Activated CD4-positive, alpha-beta memory T cell treated with anti-CD3 and anti-CD28 coated beads, Interleukin-2, amount 10 ng/mL, durations not matched to agents 7 days and 5 days (primary cell): ENCODE measurements at regions of chr11 and their contacts with region 1.

Region 1: DNA sequence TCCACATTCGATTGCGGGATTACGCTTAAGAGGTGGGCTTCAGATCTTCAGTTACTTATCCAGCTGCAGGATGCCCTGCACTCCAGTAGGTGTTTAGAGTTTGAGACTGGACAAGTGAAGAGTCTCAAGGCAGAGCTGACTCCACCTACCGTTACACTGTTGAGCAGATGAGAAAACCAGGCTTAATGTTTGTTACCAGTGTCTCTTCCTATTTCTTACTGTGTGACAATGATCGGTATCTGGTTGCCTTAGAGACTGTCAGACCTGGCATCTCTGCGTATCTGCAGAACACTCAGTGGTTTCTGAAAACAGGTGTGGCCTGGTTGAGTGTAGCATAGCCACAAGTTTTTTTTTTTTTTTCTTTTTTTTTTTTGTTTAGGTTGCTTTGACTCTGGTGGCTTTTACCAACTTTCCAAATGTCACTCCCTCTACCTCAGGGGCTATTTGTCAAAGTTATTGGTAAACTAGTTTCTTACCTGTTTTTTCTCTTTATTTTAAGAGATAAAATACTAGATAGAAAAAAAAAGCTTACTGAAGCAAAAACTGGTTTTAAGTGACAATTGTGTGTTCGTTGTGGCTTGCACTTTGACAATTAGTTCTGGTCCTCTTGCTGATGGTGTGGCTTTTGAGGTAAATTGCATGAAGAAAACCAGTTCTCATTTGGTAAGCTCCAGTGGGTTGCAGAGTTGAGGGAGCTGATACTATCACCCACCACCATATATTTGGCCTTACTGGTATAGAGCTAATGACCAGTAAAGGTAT is 284.8 kb downstream of the ETS1 start:
- DNase-seq: peak; percentile 84
- H3K4me3 Mint-ChIP-seq: peak overlapping the region; percentile 84
- H3K27ac Mint-ChIP-seq: peak overlapping the region; percentile 87
- H3K4me1 Mint-ChIP-seq: peaks cover 72% of the 10 kb centered on the region
- H3K27me3 Mint-ChIP-seq: no peaks in the 10 kb centered on the region

Region 2: DNA sequence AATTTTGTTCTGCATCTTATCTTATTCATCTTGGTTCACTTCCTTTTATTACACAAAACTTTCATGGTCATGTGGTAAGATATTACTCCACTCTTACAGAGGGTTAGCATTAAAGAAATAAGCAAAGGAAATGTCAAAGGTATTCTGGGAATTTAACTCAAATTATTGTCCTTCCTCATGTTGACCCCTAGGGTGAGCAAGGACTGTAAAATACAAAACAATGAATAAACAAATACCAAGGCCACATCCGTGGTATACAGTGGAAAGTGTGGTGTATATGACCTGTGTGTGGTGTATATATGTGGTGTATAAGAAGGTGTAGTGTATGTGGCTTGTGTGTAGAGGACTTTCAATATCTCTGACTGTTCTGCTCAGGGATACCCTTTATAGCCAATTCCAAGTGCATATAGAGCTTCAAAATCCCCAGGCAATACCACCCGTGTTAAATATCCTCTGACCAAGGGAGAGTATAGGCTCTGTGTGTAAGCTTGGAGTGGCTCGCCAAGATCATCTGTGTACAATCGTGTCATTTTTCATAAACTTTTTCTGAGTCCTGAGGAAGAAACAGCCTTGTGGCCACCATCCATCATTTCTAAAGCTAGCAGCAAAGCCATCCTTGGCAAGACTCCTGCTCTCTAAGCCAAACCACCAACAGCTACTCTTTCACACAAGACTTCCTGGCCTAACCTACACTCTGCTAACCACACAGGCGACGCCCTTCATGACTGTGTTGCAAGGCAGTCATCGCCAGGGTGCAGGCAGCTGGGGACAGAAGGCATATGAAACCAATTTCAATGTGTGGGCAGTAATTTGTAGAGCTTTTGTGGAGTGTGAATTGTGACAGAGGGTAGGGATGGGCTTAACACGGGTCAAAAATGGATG is 263.2 kb before region 1 on chr11:
- CTCF ChIA-PET with region 1: interaction called, 5 read pairs
- POLR2A ChIA-PET with region 1: interaction called, 16 read pairs
- DNase-seq: peak; percentile 89
- H3K4me3 Mint-ChIP-seq: peak overlapping the region; percentile 64
- H3K27ac Mint-ChIP-seq: peak overlapping the region; percentile 98
- H3K4me1 Mint-ChIP-seq: peaks cover 48% of the 10 kb centered on the region
- H3K27me3 Mint-ChIP-seq: no peaks in the 10 kb centered on the region

Region 3: DNA sequence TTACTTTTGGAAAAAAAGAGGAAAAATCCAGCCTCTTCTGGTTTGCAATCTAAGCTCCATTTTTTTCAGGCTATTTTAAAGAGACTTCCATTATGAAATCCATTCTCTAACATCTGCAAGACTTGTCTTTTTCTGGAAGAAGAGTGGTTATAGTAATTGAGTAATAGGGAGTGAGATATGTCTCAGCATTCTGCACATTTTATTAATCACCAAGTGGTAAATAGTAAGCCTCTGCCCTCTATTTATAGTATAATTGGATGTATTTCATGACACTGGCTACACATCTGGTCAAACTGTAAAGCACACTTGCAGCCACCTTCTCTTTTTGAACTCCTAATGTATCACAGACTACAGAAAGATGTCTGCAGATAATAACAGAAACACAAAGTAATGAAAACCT is 106.4 kb before region 1 on chr11:
- CTCF ChIA-PET with region 1: no interaction called
- POLR2A ChIA-PET with region 1: no interaction called
- DNase-seq: no peak
- H3K4me3 Mint-ChIP-seq: no peak overlapping the region
- H3K27ac Mint-ChIP-seq: no peak overlapping the region
- H3K4me1 Mint-ChIP-seq: peaks cover 34% of the 10 kb centered on the region
- H3K27me3 Mint-ChIP-seq: peaks cover 2% of the 10 kb centered on the region

Region 4: GRCh38 chr11:128246364-128246801 is 56.2 kb before region 1 on chr11:
- CTCF ChIA-PET with region 1: no interaction called
- POLR2A ChIA-PET with region 1: no interaction called
- DNase-seq: no peak
- H3K4me3 Mint-ChIP-seq: no peak overlapping the region
- H3K27ac Mint-ChIP-seq: no peak overlapping the region
- H3K4me1 Mint-ChIP-seq: no peaks in the 10 kb centered on the region
- H3K27me3 Mint-ChIP-seq: peaks cover 6% of the 10 kb centered on the region

Region 5: GRCh38 chr11:128261011-128261421 is 41.6 kb before region 1 on chr11:
- CTCF ChIA-PET with region 1: no interaction called
- POLR2A ChIA-PET with region 1: no interaction called
- DNase-seq: no peak
- H3K4me3 Mint-ChIP-seq: no peak overlapping the region
- H3K27ac Mint-ChIP-seq: no peak overlapping the region
- H3K4me1 Mint-ChIP-seq: no peaks in the 10 kb centered on the region
- H3K27me3 Mint-ChIP-seq: peaks cover 9% of the 10 kb centered on the region

Region 6: DNA sequence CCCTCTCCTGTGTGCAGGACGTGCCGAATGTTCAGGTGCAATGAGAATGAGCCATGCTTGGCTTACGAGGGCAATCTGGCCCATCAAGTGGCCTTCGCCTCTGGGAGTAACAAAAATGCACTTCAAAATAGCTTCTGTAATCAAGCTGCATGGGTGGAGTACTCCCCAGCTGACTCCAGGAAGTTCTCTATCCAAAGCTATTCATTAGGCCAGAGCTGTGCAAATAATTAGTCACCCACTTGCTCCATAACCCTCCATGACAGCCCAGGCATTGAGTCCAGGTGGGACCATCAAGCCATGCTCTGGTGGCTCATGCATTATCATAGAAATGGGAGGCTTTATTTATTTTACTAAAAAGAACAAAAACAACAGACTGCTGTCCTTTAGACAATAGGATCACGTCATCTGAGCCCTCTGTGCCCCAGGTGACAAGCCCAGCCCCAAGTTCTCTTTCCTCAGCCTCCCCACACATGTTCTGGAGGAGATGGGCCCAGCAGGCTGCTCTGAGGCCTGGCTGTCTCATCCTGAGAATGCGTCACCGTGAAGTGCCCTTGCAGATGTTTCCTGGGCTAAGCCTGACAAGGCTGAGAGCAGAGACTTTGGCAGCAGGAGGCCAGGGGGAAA is 40.0 kb after region 1 on chr11:
- CTCF ChIA-PET with region 1: interaction called, 5 read pairs
- POLR2A ChIA-PET with region 1: interaction called, 66 read pairs
- DNase-seq: peak; percentile 79
- H3K4me3 Mint-ChIP-seq: peak overlapping the region; percentile 65
- H3K27ac Mint-ChIP-seq: peak overlapping the region; percentile 96
- H3K4me1 Mint-ChIP-seq: peaks cover 79% of the 10 kb centered on the region
- H3K27me3 Mint-ChIP-seq: no peaks in the 10 kb centered on the region

Region 7: DNA sequence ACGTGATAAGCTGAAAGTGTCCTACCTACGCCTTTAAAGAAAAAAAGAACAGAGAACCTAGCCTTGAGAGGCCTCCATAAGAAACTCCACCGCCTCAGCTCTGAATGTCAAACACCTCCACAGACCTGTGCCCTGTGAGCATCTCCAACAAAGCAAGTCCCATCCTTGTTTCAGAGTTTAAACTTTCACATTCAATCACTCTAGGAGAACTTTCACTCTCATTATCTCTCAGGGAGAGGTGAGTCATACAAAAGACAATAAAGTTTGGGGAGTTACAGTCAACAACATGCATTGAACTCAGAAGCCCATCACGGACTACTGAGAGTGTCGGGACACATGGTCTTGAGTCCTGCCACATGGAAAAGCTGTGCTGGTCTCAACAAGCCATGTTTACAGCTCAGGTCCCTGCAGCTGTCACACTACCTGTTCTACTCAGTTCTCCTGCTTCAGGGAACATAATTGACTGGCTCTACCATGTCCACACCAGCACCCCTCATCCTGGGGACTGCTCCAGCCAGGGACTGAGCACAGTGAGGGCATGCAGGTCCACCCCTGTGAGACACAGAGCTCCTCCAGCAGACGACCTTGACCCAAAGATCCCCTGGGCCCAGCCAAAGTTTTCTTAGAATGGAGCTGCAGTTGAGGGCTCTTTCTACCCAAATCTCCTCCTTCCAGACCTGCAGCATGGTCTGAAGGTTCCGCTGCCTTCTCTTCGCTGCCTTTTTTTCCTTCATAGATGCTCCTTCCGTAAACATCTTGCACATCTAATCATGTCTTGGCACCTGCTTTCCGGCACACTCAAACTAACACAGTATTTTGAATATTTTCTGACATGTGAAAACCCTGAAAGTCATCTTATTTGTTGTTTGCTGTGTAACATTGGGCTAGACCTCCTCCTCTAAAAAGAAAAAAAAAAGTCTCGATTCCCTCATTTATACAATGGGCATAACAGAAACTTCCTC is 169.8 kb after region 1 on chr11:
- CTCF ChIA-PET with region 1: interaction called, 13 read pairs
- POLR2A ChIA-PET with region 1: interaction called, 64 read pairs
- DNase-seq: no peak
- H3K4me3 Mint-ChIP-seq: peak overlapping the region; percentile 44
- H3K27ac Mint-ChIP-seq: peak overlapping the region; percentile 80
- H3K4me1 Mint-ChIP-seq: peaks cover 99% of the 10 kb centered on the region
- H3K27me3 Mint-ChIP-seq: no peaks in the 10 kb centered on the region

Region 8: DNA sequence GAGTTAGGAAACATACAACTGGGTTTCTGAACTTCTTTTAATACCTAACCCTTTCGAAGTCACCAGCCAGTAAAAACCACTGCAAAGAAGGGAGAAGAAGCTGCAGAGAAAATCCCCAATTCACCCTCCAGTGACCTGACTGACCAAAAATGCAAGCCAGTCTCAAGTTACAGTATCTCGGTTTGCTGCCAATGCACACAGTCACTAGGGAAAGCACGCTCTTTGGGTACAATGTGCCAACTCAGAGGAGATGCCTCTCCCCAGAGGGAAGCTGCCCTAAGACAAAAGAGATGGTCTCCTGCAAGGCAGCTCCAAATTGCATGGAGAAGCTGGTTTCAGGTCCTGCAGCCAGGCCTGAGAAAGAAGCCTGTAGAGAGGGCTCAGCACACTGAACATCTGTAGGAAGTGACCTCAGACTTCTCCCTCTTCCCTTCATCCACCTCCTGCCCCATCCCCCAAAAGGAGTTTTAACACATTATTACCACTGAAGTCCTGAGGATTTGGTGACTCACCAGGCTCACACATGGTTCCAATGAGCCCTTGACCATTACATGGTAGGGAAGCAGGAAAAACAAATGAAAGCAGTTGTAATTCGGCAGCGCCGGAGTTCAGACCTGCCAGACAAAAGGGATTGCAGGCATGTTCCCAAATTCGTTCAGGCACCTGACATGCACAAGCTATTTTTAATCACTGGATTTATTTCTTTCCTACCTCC is 194.6 kb after region 1 on chr11:
- CTCF ChIA-PET with region 1: interaction called, 7 read pairs
- POLR2A ChIA-PET with region 1: interaction called, 34 read pairs
- DNase-seq: no peak
- H3K4me3 Mint-ChIP-seq: peak overlapping the region; percentile 58
- H3K27ac Mint-ChIP-seq: peak overlapping the region; percentile 87
- H3K4me1 Mint-ChIP-seq: peaks cover 96% of the 10 kb centered on the region
- H3K27me3 Mint-ChIP-seq: no peaks in the 10 kb centered on the region

Region 9: GRCh38 chr11:128624269-128625175 is 321.9 kb after region 1 on chr11:
- CTCF ChIA-PET with region 1: interaction called, 11 read pairs
- POLR2A ChIA-PET with region 1: interaction called, 23 read pairs
- DNase-seq: peak; percentile 75
- H3K4me3 Mint-ChIP-seq: peak overlapping the region; percentile 55
- H3K27ac Mint-ChIP-seq: peak overlapping the region; percentile 93
- H3K4me1 Mint-ChIP-seq: peaks cover 84% of the 10 kb centered on the region
- H3K27me3 Mint-ChIP-seq: no peaks in the 10 kb centered on the region